Activated CD8-positive, alpha-beta T cell treated with anti-CD3 and anti-CD28 coated beads for 36 hours (primary cell): ENCODE measurements at regions of chr6 and their contacts with region 1.

Region 1: GRCh38 chr6:39040080-39040673 is 8.4 kb upstream of the GLP1R start:
- DNase-seq: no peak
- ATAC-seq: no peak
- H3K4me3 Mint-ChIP-seq: no peak overlapping the region
- H3K27ac Mint-ChIP-seq: no peak overlapping the region
- H3K4me1 Mint-ChIP-seq: peaks cover 10% of the 10 kb centered on the region
- H3K27me3 Mint-ChIP-seq: peaks cover 44% of the 10 kb centered on the region
- CTCF ChIP-seq: no peak

Region 2: DNA sequence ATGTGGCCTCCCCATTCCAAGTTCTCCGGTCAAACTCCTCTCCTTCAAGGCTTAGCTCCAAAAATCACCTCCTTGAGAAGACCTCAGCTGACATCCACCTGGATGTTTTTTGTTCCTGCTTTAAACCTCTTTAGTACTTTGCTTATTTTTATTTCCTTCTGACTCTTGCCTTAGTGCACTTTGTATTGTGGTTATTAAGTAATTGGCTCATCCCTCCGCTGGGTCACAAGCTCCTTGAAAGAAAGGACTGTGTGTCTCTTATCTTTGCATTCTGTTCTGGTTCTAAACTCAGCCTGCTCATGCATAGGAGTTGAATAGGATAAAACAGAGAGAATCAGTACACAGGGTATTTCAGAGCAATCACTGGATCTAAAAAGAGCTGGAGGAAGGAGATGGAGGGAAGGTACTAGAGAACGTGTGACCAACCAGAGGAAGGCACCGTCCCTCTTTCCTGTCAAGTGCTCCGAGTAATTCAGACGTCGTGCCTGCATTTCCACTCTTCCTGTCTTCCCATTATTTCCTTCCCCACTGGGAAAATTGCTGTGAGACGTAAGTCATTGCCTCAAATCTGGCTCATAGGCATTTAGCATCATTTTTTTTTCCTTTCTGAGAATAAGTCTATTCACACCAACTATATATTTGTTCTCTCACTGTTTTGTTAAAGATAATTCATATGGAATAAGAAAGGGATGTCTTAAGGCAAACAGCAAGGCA is 51.3 kb before region 1 on chr6:
- CTCF ChIA-PET with region 1: no interaction called
- POLR2A ChIA-PET with region 1: no interaction called
- intact Hi-C with region 1: no loop called
- DNase-seq: no peak
- ATAC-seq: no peak
- H3K4me3 Mint-ChIP-seq: no peak overlapping the region
- H3K27ac Mint-ChIP-seq: no peak overlapping the region
- H3K4me1 Mint-ChIP-seq: no peaks in the 10 kb centered on the region
- H3K27me3 Mint-ChIP-seq: peaks cover 11% of the 10 kb centered on the region
- CTCF ChIP-seq: no peak

Region 3: GRCh38 chr6:39029156-39030011 is 10.8 kb before region 1 on chr6:
- CTCF ChIA-PET with region 1: interaction called, 10 read pairs
- POLR2A ChIA-PET with region 1: no interaction called
- intact Hi-C with region 1: no loop called
- DNase-seq: peak; percentile 75
- ATAC-seq: peak; percentile 99
- H3K4me3 Mint-ChIP-seq: no peak overlapping the region
- H3K27ac Mint-ChIP-seq: no peak overlapping the region
- H3K4me1 Mint-ChIP-seq: no peaks in the 10 kb centered on the region
- H3K27me3 Mint-ChIP-seq: peaks cover 42% of the 10 kb centered on the region
- CTCF ChIP-seq: peak; percentile 84

Region 4: DNA sequence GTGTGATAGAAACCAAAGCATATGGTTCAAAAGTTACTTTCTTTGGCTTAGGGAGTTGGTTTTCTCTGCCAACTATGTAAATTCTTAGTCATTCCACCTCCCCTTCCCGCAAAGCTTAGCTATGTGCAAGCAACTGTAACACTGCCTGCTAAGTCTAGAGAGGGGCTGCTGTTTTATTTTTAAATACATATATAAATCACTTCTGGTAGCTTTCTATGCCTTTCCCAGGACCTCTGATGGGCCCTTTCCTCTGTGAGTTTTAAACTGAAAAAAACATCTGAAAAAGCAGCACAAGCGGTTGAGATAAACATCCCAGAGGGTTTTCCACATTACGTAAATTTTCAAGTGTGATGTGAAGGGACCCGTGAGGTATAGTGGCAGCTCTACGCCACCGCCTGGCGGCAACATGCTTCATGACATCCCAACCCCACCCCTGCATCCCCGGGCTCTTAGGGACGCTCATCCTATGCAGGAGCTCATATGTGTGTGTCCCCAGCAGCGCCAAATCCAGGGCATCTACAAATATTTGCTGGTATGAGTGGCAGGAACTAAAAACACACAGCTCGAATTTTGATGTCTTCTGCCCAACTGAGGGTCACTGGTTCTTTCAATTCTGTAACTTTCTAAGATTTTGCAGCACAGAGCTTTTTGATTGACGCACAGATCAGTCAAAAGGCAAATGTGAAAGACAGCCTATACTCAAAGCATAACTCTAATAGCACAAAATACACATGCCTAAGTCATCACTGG is 62.1 kb after region 1 on chr6:
- CTCF ChIA-PET with region 1: no interaction called
- POLR2A ChIA-PET with region 1: no interaction called
- intact Hi-C with region 1: no loop called
- DNase-seq: peak; percentile 44
- ATAC-seq: peak; percentile 37
- H3K4me3 Mint-ChIP-seq: no peak overlapping the region
- H3K27ac Mint-ChIP-seq: no peak overlapping the region
- H3K4me1 Mint-ChIP-seq: peaks cover 36% of the 10 kb centered on the region
- H3K27me3 Mint-ChIP-seq: no peaks in the 10 kb centered on the region
- CTCF ChIP-seq: peak; percentile 36